ENCODE measurements at regions of chr1 and their contacts with region 1.

Region 1: GRCh38 chr1:103156966-103157365 is 48.6 kb upstream of the COL11A1 start:
- DNase-seq: no peak
- ATAC-seq: no peak
- H3K4me3 ChIP-seq: no peak overlapping the region
- H3K4me3 Mint-ChIP-seq: no peak overlapping the region
- H3K27ac ChIP-seq: no peak overlapping the region
- H3K27ac Mint-ChIP-seq: no peak overlapping the region
- H3K4me1 ChIP-seq: no peaks in the 10 kb centered on the region
- H3K4me1 Mint-ChIP-seq: no peaks in the 10 kb centered on the region
- H3K27me3 ChIP-seq: no peaks in the 10 kb centered on the region
- H3K27me3 Mint-ChIP-seq: no peaks in the 10 kb centered on the region

Region 2: GRCh38 chr1:103170609-103171008 is 13.6 kb after region 1 on chr1:
- CTCF ChIA-PET with region 1: no interaction called
- POLR2A ChIA-PET with region 1: no interaction called
- intact Hi-C with region 1: loop called in 1 of 2 experiments (anchors 1 kb)
- DNase-seq: no peak
- ATAC-seq: no peak
- H3K4me3 ChIP-seq: no peak overlapping the region
- H3K4me3 Mint-ChIP-seq: no peak overlapping the region
- H3K27ac ChIP-seq: no peak overlapping the region
- H3K27ac Mint-ChIP-seq: no peak overlapping the region
- H3K4me1 ChIP-seq: no peaks in the 10 kb centered on the region
- H3K4me1 Mint-ChIP-seq: no peaks in the 10 kb centered on the region
- H3K27me3 ChIP-seq: no peaks in the 10 kb centered on the region
- H3K27me3 Mint-ChIP-seq: no peaks in the 10 kb centered on the region

Measured in naive thymus-derived CD4-positive, alpha-beta T cell (primary cell).